ENCODE measurements at regions of chr1 and their contacts with region 1.

Region 1: GRCh38 chr1:39919545-39919944 is 17.8 kb upstream of the MYCL start:
- DNase-seq: peak; percentile 61
- H3K4me3 Mint-ChIP-seq: no peak overlapping the region
- H3K27ac Mint-ChIP-seq: no peak overlapping the region
- H3K4me1 Mint-ChIP-seq: peaks cover 2% of the 10 kb centered on the region
- H3K27me3 Mint-ChIP-seq: no peaks in the 10 kb centered on the region

Region 2: DNA sequence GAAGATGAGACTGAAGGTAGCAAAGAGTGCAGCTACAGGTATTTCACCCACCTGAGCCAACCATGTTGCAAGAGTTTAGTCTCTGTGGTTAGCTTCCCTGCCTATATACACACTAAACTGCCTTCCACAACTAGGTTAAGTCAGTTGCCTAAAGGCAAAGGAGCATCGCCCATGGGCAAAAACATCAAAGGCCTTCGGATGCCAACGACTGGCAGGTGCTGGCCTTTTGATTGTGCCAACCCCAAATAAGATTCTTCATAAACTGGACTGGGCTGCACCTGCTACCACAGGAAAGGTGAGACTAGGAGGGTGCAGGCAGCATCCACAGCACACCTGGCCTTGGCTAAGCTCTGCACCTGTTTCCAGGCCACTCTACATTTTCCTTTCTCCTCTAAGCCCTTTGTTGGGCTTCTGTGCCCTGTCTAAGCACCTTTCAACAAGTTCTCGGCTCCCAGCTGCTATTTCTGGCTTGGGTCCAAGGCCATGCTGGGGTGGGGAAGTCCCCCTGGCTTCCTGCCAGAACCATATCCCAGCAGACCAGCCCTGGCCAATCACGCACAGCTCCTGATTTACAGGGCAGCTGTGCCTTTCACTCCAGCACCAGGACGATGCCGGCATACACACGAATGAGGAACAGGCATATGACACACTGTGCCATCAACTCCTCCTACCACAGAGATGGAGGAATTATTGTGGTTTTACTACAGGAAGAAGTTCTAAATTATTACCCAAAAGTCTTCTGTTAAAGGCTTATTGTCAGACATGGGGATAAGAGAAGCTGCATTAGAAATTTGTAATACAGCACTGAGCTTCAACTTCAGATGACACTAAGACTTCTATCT is 74.0 kb before region 1 on chr1:
- CTCF ChIA-PET with region 1: interaction called, 10 read pairs
- intact Hi-C with region 1: no loop called
- DNase-seq: peak; percentile 94
- H3K4me3 Mint-ChIP-seq: no peak overlapping the region
- H3K27ac Mint-ChIP-seq: peak overlapping the region; percentile 87
- H3K4me1 Mint-ChIP-seq: peaks cover 52% of the 10 kb centered on the region
- H3K27me3 Mint-ChIP-seq: no peaks in the 10 kb centered on the region

Region 3: DNA sequence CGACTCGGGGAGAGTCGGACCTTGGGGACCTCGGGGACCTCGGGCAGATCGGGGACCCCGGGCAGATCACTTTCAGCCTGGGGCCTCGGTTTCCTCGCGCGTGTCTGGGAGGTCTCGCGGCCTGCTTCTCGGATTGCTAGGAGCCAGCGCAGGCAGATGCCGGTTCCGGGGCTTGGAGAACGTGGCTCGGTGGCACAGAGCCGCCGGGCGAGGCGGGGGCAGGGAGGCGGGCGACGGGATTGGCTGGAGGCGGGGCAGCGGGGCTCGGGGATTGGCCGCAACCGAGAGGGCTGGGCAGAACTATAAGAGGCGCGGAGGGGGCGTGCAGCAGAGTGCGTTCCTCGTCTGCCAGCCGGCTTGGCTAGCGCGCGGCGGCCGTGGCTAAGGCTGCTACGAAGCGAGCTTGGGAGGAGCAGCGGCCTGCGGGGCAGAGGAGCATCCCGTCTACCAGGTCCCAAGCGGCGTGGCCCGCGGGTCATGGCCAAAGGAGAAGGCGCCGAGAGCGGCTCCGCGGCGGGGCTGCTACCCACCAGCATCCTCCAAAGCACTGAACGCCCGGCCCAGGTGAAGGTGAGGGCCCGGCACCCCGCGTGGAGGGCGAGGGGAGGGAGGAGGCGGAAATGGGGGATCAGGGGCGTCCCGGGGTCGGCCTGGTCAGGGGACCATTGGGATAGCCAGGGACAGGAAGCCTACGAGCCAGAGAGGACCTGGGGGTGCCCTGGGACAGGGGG is 35.4 kb after region 1 on chr1 and contains the start of gene MFSD2A:
- CTCF ChIA-PET with region 1: interaction called, 6 read pairs
- intact Hi-C with region 1: loop called (anchors 2 kb)
- DNase-seq: peak; percentile 89
- H3K4me3 Mint-ChIP-seq: peak within 1 kb of the TSS; percentile 88
- H3K27ac Mint-ChIP-seq: peak within 1 kb of the TSS; percentile 77
- H3K4me1 Mint-ChIP-seq: peaks cover 33% of the 10 kb centered on the region
- H3K27me3 Mint-ChIP-seq: no peaks in the 10 kb centered on the region
- total RNA-seq, gene MFSD2A: 4.0 to 4.5 TPM

Region 4: DNA sequence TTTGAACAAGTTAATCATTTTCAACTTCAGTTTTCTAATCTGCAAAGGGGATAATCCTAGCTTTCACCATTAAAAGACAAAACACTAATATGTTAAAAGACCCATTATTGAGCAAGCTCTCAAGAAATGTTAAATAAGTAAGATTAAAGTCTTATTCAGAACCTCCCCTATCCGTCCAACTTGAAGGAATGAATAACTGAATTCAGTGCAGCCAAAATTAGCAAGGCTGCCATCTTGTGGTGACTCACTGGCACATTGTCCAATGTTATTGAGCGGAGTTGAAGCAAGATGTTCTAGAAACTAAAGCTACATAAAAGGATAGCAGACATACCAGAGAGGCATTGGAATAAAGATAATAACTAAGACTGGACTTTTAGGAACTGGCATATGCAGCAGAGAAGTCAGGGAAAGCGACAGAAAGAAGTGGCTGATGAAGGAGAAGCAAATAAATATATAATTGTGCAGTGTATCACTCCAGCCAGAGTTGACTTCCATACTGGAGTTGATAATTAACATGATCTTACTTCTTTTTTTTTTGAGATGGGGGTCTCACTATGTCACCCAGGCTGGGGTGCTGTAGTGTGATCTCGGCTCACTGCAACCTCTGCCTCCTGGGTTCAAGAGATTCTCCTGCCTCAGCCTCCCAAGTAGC is 112.8 kb after region 1 on chr1:
- CTCF ChIA-PET with region 1: interaction called, 42 read pairs
- intact Hi-C with region 1: loop called (anchors 1 kb)
- DNase-seq: peak; percentile 76
- H3K4me3 Mint-ChIP-seq: no peak overlapping the region
- H3K27ac Mint-ChIP-seq: no peak overlapping the region
- H3K4me1 Mint-ChIP-seq: peaks cover 36% of the 10 kb centered on the region
- H3K27me3 Mint-ChIP-seq: no peaks in the 10 kb centered on the region

Measured in activated naive CD4-positive, alpha-beta T cell treated with anti-CD3 and anti-CD28 coated beads for 36 hours (primary cell).